Activated CD4-positive, alpha-beta T cell treated with anti-CD3 and anti-CD28 coated beads for 36 hours (primary cell): ENCODE measurements at regions of chr3 and their contacts with region 1.

Region 1: GRCh38 chr3:156151824-156152428 is 31.5 kb downstream of the KCNAB1 start:
- DNase-seq: peak; percentile 77
- ATAC-seq: peak; percentile 78
- H3K4me3 Mint-ChIP-seq: no peak overlapping the region
- H3K27ac Mint-ChIP-seq: no peak overlapping the region
- H3K4me1 Mint-ChIP-seq: no peaks in the 10 kb centered on the region
- H3K27me3 Mint-ChIP-seq: no peaks in the 10 kb centered on the region

Region 2: GRCh38 chr3:156093964-156094363 is 58.0 kb before region 1 on chr3:
- CTCF ChIA-PET with region 1: no interaction called
- POLR2A ChIA-PET with region 1: no interaction called
- intact Hi-C with region 1: no loop called
- DNase-seq: no peak
- ATAC-seq: no peak
- H3K4me3 Mint-ChIP-seq: no peak overlapping the region
- H3K27ac Mint-ChIP-seq: no peak overlapping the region
- H3K4me1 Mint-ChIP-seq: no peaks in the 10 kb centered on the region
- H3K27me3 Mint-ChIP-seq: peaks cover 11% of the 10 kb centered on the region

Region 3: DNA sequence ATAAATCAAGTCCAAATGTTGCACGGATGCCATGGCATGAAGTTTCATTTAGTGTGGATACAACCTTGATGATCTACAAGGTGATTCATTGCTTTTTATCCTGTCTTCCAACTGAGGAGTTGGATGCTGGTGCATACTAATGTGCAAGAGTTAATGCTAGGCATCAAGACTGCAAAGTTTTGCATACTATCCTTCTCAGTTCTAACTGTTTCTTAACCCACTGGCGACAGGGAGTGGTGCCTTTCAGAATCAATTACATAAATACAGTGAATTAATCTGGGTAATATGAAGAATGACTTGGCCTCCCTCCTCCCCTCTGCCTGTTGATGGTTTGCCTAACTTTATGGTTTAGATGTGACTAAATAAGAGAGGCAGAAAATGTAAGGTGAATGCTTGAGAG is 11.9 kb after region 1 on chr3:
- CTCF ChIA-PET with region 1: interaction called, 11 read pairs
- POLR2A ChIA-PET with region 1: no interaction called
- intact Hi-C with region 1: no loop called
- DNase-seq: no peak
- ATAC-seq: no peak
- H3K4me3 Mint-ChIP-seq: no peak overlapping the region
- H3K27ac Mint-ChIP-seq: no peak overlapping the region
- H3K4me1 Mint-ChIP-seq: peaks cover 11% of the 10 kb centered on the region
- H3K27me3 Mint-ChIP-seq: peaks cover 4% of the 10 kb centered on the region

Region 4: GRCh38 chr3:156449712-156450574 is 298.0 kb after region 1 on chr3:
- CTCF ChIA-PET with region 1: interaction called, 5 read pairs
- POLR2A ChIA-PET with region 1: no interaction called
- intact Hi-C with region 1: loop called in 1 of 2 experiments (anchors 2 kb)
- DNase-seq: no peak
- ATAC-seq: no peak
- H3K4me3 Mint-ChIP-seq: no peak overlapping the region
- H3K27ac Mint-ChIP-seq: no peak overlapping the region
- H3K4me1 Mint-ChIP-seq: no peaks in the 10 kb centered on the region
- H3K27me3 Mint-ChIP-seq: peaks cover 7% of the 10 kb centered on the region

Region 5: GRCh38 chr3:156519758-156520162 is 367.8 kb after region 1 on chr3:
- CTCF ChIA-PET with region 1: interaction called, 11 read pairs
- POLR2A ChIA-PET with region 1: no interaction called
- intact Hi-C with region 1: no loop called
- DNase-seq: peak; percentile 26
- ATAC-seq: peak; percentile 82
- H3K4me3 Mint-ChIP-seq: no peak overlapping the region
- H3K27ac Mint-ChIP-seq: peak overlapping the region; percentile 3
- H3K4me1 Mint-ChIP-seq: peaks cover 21% of the 10 kb centered on the region
- H3K27me3 Mint-ChIP-seq: peaks cover 26% of the 10 kb centered on the region

Region 6: DNA sequence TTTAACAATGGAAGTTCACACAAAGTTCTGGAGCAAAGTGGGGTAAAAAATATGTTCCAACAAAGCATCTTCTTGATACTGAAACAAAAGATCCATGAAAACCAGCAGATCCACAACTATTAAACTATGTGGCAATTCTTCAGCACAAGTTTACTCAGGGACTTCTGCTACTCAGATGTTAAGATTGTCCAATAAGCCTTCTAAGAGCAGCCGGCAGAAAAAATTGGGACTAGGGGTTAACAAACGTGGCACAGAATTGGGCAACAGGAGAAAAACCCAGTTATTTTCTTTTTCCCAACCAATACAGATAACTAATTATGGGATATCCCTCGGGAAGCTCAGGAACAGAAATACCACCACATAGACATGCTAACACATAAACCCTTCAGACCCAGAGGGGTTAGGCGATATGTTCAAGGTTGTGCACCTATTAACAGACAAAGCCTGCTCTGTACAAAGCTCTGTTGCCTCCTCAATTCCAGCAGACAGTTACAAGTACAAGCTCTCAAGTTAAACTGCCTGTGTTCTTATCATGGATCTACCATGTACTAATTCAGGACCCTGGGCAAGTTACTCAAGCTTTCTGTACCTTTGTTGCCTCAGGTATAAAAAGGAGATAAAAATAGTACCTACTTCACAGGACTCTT is 396.2 kb after region 1 on chr3:
- CTCF ChIA-PET with region 1: interaction called, 13 read pairs
- POLR2A ChIA-PET with region 1: no interaction called
- intact Hi-C with region 1: no loop called
- DNase-seq: no peak
- ATAC-seq: no peak
- H3K4me3 Mint-ChIP-seq: no peak overlapping the region
- H3K27ac Mint-ChIP-seq: peak overlapping the region; percentile 8
- H3K4me1 Mint-ChIP-seq: peaks cover 47% of the 10 kb centered on the region
- H3K27me3 Mint-ChIP-seq: no peaks in the 10 kb centered on the region

Region 7: DNA sequence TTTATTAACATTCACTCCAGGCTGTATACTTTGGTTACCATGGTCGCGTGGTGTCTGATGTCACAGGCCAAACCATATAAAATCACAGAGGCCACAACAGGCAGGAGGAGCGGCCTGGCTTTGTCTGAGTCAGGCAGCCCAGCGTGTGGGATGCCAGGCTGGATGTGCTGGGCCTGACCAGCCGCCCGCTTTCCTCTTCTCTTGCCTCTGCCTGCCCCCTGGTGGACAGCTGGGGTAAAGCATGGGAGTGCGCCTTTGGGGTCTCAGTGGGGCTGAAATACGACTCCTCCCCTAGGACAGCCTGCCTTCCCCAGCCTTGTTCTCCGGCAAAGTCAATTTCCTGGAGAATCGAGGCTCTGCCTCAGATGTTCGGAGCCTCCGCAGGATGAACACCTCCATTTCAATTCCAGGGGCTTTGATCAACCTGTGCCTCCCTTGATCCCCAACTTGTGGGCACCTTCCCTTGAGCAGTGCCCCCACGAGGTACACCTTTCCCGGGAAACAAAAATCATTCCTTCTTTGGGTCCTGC is 929.8 kb after region 1 on chr3:
- CTCF ChIA-PET with region 1: interaction called, 6 read pairs
- POLR2A ChIA-PET with region 1: no interaction called
- intact Hi-C with region 1: loop called (anchors 1 to 2 kb)
- DNase-seq: peak; percentile 90
- ATAC-seq: peak; percentile 91
- H3K4me3 Mint-ChIP-seq: no peak overlapping the region
- H3K27ac Mint-ChIP-seq: peak overlapping the region; percentile 66
- H3K4me1 Mint-ChIP-seq: peaks cover 32% of the 10 kb centered on the region
- H3K27me3 Mint-ChIP-seq: no peaks in the 10 kb centered on the region

Region 8: DNA sequence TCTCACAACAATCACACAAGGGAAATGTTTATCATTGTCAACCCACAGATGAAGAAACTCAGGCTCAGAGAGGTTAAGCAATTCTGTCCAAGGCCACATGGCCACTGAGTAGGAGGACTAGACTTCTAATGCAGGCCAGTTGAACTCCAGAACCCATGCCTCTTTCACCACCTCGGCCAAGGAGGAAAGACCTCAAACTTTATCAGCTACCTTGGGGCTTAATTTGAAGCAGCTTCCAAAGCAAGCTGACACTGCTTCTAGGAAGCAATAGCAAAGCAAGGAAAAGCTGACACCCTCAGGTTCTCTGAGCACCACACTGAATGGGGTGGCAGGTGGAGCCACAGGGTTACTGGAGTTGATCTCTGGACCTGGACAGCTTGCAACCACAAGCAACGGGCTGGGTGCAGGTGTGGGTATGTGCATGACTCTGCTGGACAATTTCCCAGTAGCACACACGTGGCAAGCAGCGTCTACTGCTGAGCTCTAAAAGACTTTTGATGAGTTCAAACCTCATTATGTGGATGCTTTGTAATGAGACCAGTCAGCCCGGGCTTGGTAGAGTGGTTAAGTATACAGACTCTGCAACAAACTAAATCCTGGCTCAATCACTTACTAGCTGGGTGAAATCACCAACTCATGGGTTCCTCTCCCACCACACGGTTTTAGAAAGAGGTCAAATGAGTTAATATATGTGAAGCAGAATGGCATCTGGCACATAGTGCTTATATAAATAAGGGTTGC is 984.9 kb after region 1 on chr3:
- CTCF ChIA-PET with region 1: interaction called, 13 read pairs
- POLR2A ChIA-PET with region 1: no interaction called
- intact Hi-C with region 1: loop called in 1 of 2 experiments (anchors 2 kb)
- DNase-seq: no peak
- ATAC-seq: no peak
- H3K4me3 Mint-ChIP-seq: no peak overlapping the region
- H3K27ac Mint-ChIP-seq: peak overlapping the region; percentile 39
- H3K4me1 Mint-ChIP-seq: peaks cover 33% of the 10 kb centered on the region
- H3K27me3 Mint-ChIP-seq: no peaks in the 10 kb centered on the region